K562 (cell line): ENCODE measurements at regions of chr1 and their contacts with region 1.

Region 1: DNA sequence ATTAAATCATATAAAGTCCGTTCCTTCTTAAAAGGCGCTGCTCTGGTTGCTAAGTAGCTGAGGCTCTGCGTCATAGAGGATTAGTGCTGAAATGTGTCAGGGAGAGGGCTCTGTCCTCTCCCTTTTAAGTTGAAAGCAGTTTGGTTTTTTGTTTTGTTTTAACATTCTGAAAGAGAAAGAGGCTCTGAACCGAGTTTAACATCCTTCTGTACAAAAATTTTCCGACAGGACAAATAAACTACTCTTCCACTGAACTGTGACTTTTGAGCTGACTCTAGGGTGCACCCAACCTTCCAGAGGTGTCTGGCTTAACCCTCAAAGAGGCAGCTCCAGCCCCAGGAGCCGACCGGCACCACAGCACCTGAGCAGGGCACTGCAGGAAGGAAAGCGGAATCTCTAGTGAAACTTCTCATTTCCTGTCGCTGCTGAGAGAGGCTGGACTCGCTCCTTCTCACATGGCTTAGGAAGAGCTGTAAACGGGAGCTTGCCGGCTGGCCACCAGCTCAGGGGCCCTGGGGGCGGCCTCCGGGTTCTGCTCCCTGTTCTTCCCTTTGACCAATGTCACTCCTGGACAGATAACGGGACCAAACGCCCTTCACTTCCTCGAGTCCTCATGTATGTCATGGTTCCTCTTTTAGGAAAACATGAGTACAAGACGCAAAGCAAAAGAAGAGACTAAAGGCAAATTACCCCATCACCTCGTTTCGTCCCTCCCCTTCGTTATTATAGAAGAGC is 1.2 kb downstream of the VAV3 start:
- DNase-seq: no peak
- ATAC-seq: no peak; the same call in 2 of the 3 replicates
- H3K4me3 ChIP-seq: no peak overlapping the region
- H3K27ac ChIP-seq: no peak overlapping the region
- H3K4me1 ChIP-seq: peaks cover 0 to 9% of the 10 kb centered on the region in 2 experiments; a peak in 1 of 5 replicates
- H3K27me3 ChIP-seq: peaks cover 14 to 34% of the 10 kb centered on the region in 2 experiments; a peak in 4 of 5 replicates
- CTCF ChIP-seq: no peak
- EP300 ChIP-seq: no peak
- POLR2A ChIP-seq: no peak
- RAD21 ChIP-seq: no peak

Region 2: DNA sequence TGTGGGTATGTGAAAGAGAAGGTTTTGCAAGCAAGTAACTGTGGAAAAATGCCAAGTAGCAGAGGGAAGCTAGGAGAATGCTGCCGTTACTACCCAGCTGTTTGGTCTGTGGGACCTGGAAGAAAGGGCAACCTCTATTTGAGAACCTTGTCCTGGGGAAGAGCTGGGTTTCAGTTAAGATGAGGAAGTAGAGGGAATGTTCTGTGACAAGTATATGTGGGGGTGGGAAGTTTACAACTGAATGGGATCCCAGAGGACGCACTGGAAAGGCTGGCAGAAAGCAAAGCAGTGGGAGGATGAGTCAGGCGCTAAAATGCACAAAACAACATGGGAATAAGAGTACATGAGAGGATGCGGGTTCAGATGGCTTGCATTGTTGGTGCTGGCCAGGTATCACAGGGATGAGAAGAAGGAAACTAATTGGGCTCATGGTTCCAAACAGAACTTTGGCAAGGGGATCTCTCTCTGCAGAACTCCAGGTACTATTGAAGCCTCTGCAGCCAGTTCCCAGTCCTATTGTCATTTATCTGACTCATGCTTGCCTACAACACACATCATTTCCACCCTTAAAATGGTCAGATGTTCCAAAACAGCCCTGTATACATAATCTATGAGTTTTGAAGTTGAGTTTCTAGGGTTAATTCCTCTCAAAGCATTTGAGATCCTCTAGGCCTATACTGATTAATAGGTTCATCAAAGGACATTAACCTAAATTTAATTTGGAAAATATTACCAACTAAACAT is 89.7 kb after region 1 on chr1:
- CTCF ChIA-PET with region 1: no interaction called
- POLR2A ChIA-PET with region 1: no interaction called
- in situ Hi-C with region 1: no loop called
- intact Hi-C with region 1: loop called (anchors 5 kb)
- DNase-seq: no peak
- ATAC-seq: no peak
- H3K4me3 ChIP-seq: no peak overlapping the region
- H3K27ac ChIP-seq: no peak overlapping the region
- H3K4me1 ChIP-seq: no peaks in the 10 kb centered on the region
- H3K27me3 ChIP-seq: peaks cover 0 to 16% of the 10 kb centered on the region in 2 experiments; a peak in 3 of 5 replicates
- CTCF ChIP-seq: no peak
- EP300 ChIP-seq: no peak
- POLR2A ChIP-seq: no peak
- RAD21 ChIP-seq: no peak